Psoas muscle (tissue), 8 donors: ENCODE measurements at regions of chr5 and their contacts with region 1.

Region 1: GRCh38 chr5:16666883-16667398 is 50.1 kb upstream of the RETREG1 start:
- DNase-seq: no peak
- ATAC-seq: peak; percentile 48 to 83 (median 52)
- H3K4me3 ChIP-seq: no peak overlapping the region
- H3K27ac ChIP-seq: no peak overlapping the region
- H3K4me1 ChIP-seq: peaks cover 7% of the 10 kb centered on the region
- H3K27me3 ChIP-seq: peaks cover 0 to 2% (median 0%) of the 10 kb centered on the region in 3 donors
- CTCF ChIP-seq: peak; percentile 49

Region 2: GRCh38 chr5:16465544-16466466 is 201.1 kb before region 1 on chr5 and contains the start of gene ZNF622:
- intact Hi-C with region 1: loop called in 1 of 2 experiments (anchors 5 kb)
- DNase-seq: peak; percentile 90 to 95
- ATAC-seq: peak; percentile 81 to 89 (median 86)
- H3K4me3 ChIP-seq: peak within 1 kb of the TSS; percentile 83
- H3K27ac ChIP-seq: peak within 1 kb of the TSS; percentile 89
- H3K4me1 ChIP-seq: peaks cover 77% of the 10 kb centered on the region
- H3K27me3 ChIP-seq: no peaks in the 10 kb centered on the region
- CTCF ChIP-seq: no peak
- total RNA-seq, gene ZNF622: 11.8 to 77.2 (median 24.7) TPM

Region 3: DNA sequence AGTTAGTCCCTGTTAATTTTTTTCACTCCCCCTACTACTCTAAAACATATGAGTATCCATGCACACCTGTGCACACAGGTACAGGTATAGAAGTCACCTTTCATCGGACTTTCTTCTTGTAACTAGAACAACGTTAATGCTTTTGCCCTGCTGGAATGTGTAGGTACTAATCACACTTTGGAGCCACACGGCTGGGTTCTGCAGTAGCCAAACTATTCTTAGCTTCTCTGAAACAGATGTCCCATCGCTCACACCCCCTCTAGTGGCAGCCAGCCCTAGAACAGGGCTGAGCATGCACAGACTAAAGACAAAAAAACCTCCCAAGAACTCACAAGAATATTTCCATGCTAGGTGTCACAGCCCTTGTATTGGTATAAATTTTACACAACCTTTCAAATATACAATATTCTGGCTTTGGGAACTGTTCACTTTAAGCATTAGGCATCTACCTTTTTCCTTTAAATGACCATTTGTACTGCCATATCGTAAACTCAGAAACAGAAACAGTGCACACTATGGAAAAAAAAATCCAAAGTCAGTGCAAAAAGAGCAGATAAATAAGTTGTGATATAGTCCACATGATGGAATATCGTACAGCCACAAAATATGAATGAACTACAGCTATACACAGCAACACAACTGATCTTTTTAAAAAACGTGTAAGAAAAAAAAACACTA is 114.1 kb before region 1 on chr5:
- intact Hi-C with region 1: loop called in 1 of 2 experiments (anchors 10 kb)
- DNase-seq: peak; percentile 75 to 87
- ATAC-seq: peak; percentile 80 to 92 (median 90)
- H3K4me3 ChIP-seq: no peak overlapping the region
- H3K27ac ChIP-seq: peak overlapping the region; percentile 84
- H3K4me1 ChIP-seq: peaks cover 28% of the 10 kb centered on the region
- H3K27me3 ChIP-seq: no peaks in the 10 kb centered on the region
- CTCF ChIP-seq: peak; percentile 84